K562 (cell line): ENCODE measurements at regions of chr10 and their contacts with region 1.

Region 1: DNA sequence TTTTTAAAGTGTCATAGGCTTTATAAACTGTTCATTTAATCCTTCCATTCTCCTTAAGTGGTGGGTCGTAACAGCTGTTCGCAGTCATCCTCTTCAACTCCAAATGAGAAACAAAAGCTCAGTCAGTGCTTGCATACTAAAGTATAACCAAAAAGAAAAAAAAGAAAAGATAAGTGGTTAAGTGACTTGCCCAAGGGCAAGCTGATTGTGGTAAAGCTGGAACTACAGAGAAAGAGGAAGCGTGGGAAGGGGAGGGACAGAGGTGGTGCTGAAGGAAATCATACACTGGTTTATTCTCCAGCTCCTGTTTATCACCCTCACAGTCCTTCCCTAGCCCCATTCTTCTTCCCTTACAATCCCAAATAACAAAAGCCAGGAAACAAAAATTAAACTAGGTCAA is 29.6 kb downstream of the IDE start:
- DNase-seq: peak in 1 of 4 experiments; percentile 29
- ATAC-seq: peak; percentile 76
- H3K4me3 ChIP-seq: no peak overlapping the region
- H3K27ac ChIP-seq: no peak overlapping the region
- H3K4me1 ChIP-seq: peaks cover 0 to 2% of the 10 kb centered on the region in 2 experiments; a peak in 3 of 5 replicates
- H3K27me3 ChIP-seq: no peaks in the 10 kb centered on the region
- CTCF ChIP-seq: no peak
- EP300 ChIP-seq: no peak
- POLR2A ChIP-seq: no peak
- RAD21 ChIP-seq: no peak

Region 2: DNA sequence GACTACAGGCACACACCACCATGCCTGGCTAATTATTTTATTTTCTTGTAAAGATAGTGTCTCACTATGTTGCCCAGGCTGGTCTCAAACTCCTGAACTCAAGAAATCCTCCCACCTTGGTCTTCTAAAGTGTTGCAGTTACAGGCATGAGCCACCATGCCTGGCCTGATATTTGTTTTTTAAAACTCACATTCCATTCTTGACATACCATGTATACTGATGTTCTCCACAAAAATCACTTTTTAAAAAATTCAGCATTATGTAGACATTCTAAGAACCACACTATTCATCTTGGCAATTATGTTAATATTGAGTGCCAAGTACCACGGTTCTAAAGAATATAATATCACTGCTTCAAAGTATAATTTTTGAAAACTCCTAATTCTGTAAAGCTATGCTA is 13.9 kb before region 1 on chr10:
- CTCF ChIA-PET with region 1: no interaction called
- POLR2A ChIA-PET with region 1: interaction called, 16 read pairs
- in situ Hi-C with region 1: no loop called
- intact Hi-C with region 1: no loop called
- DNase-seq: no peak
- ATAC-seq: no peak
- H3K4me3 ChIP-seq: no peak overlapping the region
- H3K27ac ChIP-seq: no peak overlapping the region
- H3K4me1 ChIP-seq: peaks cover 0 to 4% of the 10 kb centered on the region in 2 experiments; a peak in 2 of 5 replicates
- H3K27me3 ChIP-seq: no peaks in the 10 kb centered on the region
- CTCF ChIP-seq: no peak
- EP300 ChIP-seq: no peak
- POLR2A ChIP-seq: no peak
- RAD21 ChIP-seq: no peak